GM12878 (cell line): ENCODE measurements at regions of chr13 and their contacts with region 1.

Region 1: GRCh38 chr13:110538632-110539031 is 22.9 kb downstream of the RAB20 start:
- DNase-seq: no peak
- ATAC-seq: peak; percentile 70
- H3K4me3 ChIP-seq: no peak overlapping the region
- H3K27ac ChIP-seq: no peak overlapping the region
- H3K4me1 ChIP-seq: peaks cover 13% of the 10 kb centered on the region
- H3K27me3 ChIP-seq: no peaks in the 10 kb centered on the region
- CTCF ChIP-seq: no peak
- EP300 ChIP-seq: no peak
- POLR2A ChIP-seq: no peak
- RAD21 ChIP-seq: no peak

Region 2: DNA sequence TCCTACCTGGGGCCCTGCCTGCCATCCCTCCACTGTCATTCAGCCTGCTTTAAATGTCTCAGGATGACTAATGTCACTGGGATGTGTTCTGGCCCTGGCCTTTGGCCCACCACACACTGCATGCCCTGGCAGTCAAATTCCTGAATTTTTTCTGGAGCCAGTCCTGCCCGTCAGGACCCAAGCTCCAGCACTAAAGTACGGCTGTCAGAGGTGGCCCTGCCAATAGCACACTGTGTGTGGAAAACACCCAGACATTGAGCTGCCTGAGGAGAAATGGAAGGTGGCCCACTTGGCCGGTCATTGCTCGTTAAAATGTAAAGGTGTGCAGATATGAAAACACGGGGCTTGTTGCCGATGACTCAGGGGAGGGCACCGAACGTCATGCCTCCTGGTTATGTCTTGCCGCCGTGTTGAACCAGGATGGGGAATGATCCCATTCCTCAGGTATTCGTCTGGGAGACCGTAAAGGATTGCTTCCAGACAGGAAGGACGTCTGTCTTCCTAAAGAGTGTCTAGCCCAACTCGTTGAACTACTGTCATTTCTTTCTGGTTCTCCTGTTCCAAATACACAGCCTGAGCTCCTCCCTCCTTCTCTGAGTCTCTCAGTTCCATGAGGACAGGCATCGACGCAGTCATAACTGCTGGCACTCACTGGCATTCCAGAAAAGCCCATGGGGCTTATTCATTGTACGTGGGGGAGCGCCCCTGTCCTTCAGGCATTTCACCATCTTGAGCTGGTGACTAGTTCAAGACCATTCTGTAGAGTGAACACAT is 190.9 kb before region 1 on chr13:
- CTCF ChIA-PET with region 1: no interaction called
- POLR2A ChIA-PET with region 1: no interaction called
- RAD21 ChIA-PET with region 1: no interaction called
- SMC1A ChIA-PET with region 1: no interaction called
- in situ Hi-C with region 1: no loop called
- intact Hi-C with region 1: no loop called
- DNase-seq: no peak
- ATAC-seq: no peak
- H3K4me3 ChIP-seq: no peak overlapping the region
- H3K27ac ChIP-seq: no peak overlapping the region
- H3K4me1 ChIP-seq: no peaks in the 10 kb centered on the region
- H3K27me3 ChIP-seq: peaks cover 0 to 4% of the 10 kb centered on the region in 2 experiments; a peak in 1 of 4 replicates
- CTCF ChIP-seq: no peak
- EP300 ChIP-seq: no peak
- POLR2A ChIP-seq: no peak
- RAD21 ChIP-seq: no peak

Region 3: GRCh38 chr13:110509971-110510786 is 28.5 kb before region 1 on chr13:
- CTCF ChIA-PET with region 1: no interaction called
- POLR2A ChIA-PET with region 1: no interaction called
- RAD21 ChIA-PET with region 1: no interaction called
- SMC1A ChIA-PET with region 1: no interaction called
- in situ Hi-C with region 1: no loop called
- intact Hi-C with region 1: loop called (anchors 2 kb)
- DNase-seq: no peak
- ATAC-seq: peak; percentile 81
- H3K4me3 ChIP-seq: no peak overlapping the region
- H3K27ac ChIP-seq: no peak overlapping the region
- H3K4me1 ChIP-seq: peaks cover under 1% of the 10 kb centered on the region; the same call in 1 of the 2 replicates
- H3K27me3 ChIP-seq: no peaks in the 10 kb centered on the region; a peak in 1 of 4 replicates
- CTCF ChIP-seq: no peak
- EP300 ChIP-seq: no peak
- POLR2A ChIP-seq: no peak
- RAD21 ChIP-seq: no peak